ENCODE measurements at regions of chr6 and their contacts with region 1.

Region 1: GRCh38 chr6:131199568-131200272 is 64.5 kb downstream of the AKAP7 start:
- DNase-seq: peak; percentile 84
- H3K4me3 Mint-ChIP-seq: peak overlapping the region; percentile 75
- H3K27ac Mint-ChIP-seq: peak overlapping the region; percentile 94
- H3K4me1 Mint-ChIP-seq: peaks cover 54% of the 10 kb centered on the region
- H3K27me3 Mint-ChIP-seq: no peaks in the 10 kb centered on the region

Region 2: DNA sequence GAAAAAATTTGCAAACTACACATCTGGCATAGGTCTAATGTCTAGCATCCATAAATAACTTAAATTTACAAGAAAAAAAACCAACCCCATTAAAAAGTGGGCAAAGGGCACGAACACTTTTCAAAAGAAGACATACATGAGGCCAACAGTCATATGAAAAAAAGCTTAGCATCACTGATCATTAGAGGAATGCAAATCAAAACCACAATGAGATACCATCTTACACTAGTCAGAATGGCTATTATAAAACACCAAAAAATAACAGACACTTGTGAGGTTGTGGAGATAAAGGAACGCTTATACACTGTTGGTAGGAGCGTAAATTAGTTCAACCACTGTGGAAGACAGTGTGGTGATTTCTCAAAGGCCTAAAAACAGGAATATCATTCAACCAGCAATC is 102.9 kb before region 1 on chr6:
- CTCF ChIA-PET with region 1: no interaction called
- POLR2A ChIA-PET with region 1: no interaction called
- DNase-seq: no peak
- H3K4me3 Mint-ChIP-seq: no peak overlapping the region
- H3K27ac Mint-ChIP-seq: no peak overlapping the region
- H3K4me1 Mint-ChIP-seq: no peaks in the 10 kb centered on the region
- H3K27me3 Mint-ChIP-seq: peaks cover 3% of the 10 kb centered on the region

Region 3: GRCh38 chr6:131182991-131183425 is 16.7 kb before region 1 on chr6:
- CTCF ChIA-PET with region 1: interaction called, 22 read pairs
- POLR2A ChIA-PET with region 1: interaction called, 17 read pairs
- DNase-seq: peak; percentile 26
- H3K4me3 Mint-ChIP-seq: no peak overlapping the region
- H3K27ac Mint-ChIP-seq: peak overlapping the region; percentile 81
- H3K4me1 Mint-ChIP-seq: peaks cover 6% of the 10 kb centered on the region
- H3K27me3 Mint-ChIP-seq: no peaks in the 10 kb centered on the region

Region 4: GRCh38 chr6:131519670-131520436 is 320.1 kb after region 1 on chr6:
- CTCF ChIA-PET with region 1: interaction called, 12 read pairs
- POLR2A ChIA-PET with region 1: interaction called, 5 read pairs
- DNase-seq: peak; percentile 50
- H3K4me3 Mint-ChIP-seq: no peak overlapping the region
- H3K27ac Mint-ChIP-seq: no peak overlapping the region
- H3K4me1 Mint-ChIP-seq: peaks cover 11% of the 10 kb centered on the region
- H3K27me3 Mint-ChIP-seq: peaks cover 6% of the 10 kb centered on the region